Thyroid gland (tissue), 4 donors: ENCODE measurements at regions of chr6 and their contacts with region 1.

Region 1: GRCh38 chr6:37018198-37019064 is 13.0 kb downstream of the FGD2 start:
- DNase-seq: peak; percentile 95 to 97
- H3K4me3 ChIP-seq: no peak overlapping the region
- H3K27ac ChIP-seq: peak overlapping the region; percentile 72 to 86 (median 83)
- H3K4me1 ChIP-seq: peaks cover 22% of the 10 kb centered on the region in 2 donors
- H3K27me3 ChIP-seq: no peaks in the 10 kb centered on the region
- CTCF ChIP-seq: peak; percentile 71 to 98 (median 87)
- POLR2A ChIP-seq: no peak

Region 2: DNA sequence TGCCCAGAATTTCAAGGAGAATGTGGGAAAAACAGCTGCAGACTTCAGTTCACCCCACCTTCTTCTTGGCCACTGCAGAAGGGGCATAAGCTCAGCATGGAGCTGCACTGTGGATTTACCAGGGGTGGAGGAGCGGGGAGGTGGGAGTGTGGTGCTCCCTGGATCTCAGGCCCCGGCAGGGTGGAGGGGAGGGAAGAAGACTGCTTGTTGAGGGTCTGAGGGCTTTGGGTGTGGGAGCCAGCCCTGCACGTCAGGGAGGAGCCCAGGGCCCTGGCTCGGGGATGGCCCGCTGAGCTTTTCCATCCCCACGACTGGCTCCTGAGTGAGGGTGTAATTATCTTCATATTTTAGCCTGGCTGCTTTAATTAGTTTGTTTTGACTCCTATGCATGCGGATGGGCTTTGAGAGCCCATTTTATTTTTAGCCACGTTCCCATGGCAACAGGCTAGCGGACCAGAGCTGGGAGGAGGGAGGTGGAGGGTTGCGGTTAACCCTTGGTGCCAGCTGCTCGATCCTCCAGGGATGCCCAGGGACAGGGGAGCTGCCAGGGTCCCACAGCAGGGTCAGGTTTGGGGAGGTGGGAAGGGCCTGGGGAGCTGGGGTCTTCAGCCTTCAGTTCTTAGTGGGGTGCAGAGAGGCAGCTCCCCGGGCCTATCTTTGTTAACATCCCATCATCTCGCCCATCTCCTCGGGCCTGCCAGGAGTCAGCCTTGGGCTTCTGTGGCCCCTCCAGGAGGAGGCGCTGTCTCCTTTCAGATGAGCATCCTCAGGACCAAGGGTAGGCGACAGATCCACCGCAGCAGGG is 252.6 kb before region 1 on chr6:
- intact Hi-C with region 1: loop called (anchors 5 kb)
- DNase-seq: peak; percentile 77 to 82
- H3K4me3 ChIP-seq: no peak overlapping the region
- H3K27ac ChIP-seq: no peak overlapping the region
- H3K4me1 ChIP-seq: peaks cover 0 to 7% of the 10 kb centered on the region in 2 donors
- H3K27me3 ChIP-seq: no peaks in the 10 kb centered on the region
- CTCF ChIP-seq: peak; percentile 30 to 85 (median 81)
- POLR2A ChIP-seq: no peak

Region 3: DNA sequence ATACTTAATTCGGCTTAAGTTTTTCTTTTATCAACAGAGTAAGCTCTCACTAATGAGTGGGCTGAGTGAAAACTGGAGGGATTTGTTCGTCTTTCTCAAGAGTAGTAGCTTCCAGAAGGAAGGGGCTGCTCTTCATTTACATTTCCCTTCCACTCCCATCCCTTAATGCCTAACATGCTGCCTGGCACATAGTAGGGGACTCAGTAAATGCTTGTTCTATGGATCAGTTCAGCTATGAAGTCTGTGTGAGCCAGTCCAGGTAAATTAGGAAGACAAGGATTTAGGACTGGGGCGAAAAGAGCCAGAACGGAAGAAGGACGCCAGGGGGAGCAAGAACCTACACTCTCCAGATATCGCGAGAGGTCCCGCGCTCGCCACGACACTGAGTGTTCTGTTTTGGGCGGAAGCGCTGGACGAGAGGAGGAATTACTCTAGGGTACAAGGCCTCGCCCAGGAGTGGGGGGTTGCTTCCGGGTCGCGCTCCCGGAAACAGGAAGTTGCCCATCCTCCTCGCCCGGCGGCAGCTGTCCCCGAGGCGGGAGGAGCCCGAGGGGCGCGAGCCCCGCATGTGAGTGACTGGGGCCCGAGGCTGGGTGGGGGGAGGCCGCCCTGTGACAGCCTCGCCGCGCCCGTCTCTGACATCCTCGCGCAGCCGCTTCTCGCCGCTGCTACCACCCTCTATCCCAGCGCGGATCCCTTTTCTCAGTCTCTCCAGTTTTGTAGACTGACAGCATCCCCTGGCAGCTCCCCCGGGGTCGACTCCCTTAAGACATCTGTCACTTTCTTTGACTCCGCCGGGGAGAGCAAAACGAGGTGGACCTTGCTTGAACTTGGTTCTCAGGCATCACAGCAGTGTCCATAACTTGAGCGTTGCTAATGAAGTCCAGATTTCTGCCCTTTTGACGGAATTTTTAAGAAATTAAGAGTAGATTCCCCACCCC is 132.7 kb before region 1 on chr6 and contains the start of gene C6orf89:
- intact Hi-C with region 1: loop called (anchors 10 kb)
- DNase-seq: peak; percentile 98 to 99
- H3K4me3 ChIP-seq: peak within 1 kb of the TSS; percentile 47 to 68 (median 63)
- H3K27ac ChIP-seq: peak within 1 kb of the TSS; percentile 89 to 98 (median 93)
- H3K4me1 ChIP-seq: peaks cover 6 to 19% of the 10 kb centered on the region in 2 donors
- H3K27me3 ChIP-seq: no peaks in the 10 kb centered on the region
- CTCF ChIP-seq: peak in 4 of 6 experiments; percentile 87 to 98 (median 94)
- POLR2A ChIP-seq: peak in 1 of 2 donors; percentile 75
- total RNA-seq, gene C6orf89: 58.2 to 89.6 (median 68.9) TPM

Region 4: DNA sequence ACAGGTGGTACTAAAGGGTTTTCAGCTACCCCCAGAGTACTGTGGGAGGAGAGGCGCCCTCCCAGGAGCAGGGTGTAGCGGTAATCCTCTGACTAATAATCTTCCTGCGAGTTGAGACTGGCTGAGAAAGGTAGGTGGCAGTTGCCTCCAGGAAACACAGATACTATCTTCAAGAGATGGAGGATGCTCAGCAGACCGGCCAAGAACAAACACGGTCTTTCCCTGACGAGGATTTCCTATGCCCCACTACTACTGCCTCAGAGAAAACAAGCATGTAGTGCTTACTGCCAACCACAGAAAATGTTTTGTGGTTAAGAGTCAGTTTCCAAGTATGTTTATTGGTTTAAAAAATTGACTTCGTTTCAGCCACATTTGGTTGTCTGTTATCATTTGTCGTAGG is 105.8 kb before region 1 on chr6:
- intact Hi-C with region 1: loop called (anchors 10 kb)
- DNase-seq: no peak
- H3K4me3 ChIP-seq: no peak overlapping the region
- H3K27ac ChIP-seq: peak overlapping the region in 2 of 3 donors; percentile 71 to 95
- H3K4me1 ChIP-seq: peaks cover 48 to 52% of the 10 kb centered on the region in 2 donors
- H3K27me3 ChIP-seq: no peaks in the 10 kb centered on the region
- CTCF ChIP-seq: no peak
- POLR2A ChIP-seq: no peak

Region 5: GRCh38 chr6:37103169-37104039 is 85.0 kb after region 1 on chr6:
- intact Hi-C with region 1: no loop called
- DNase-seq: peak; percentile 87 to 91
- H3K4me3 ChIP-seq: peak overlapping the region in 1 of 3 donors; percentile 18
- H3K27ac ChIP-seq: peak overlapping the region; percentile 77 to 93 (median 83)
- H3K4me1 ChIP-seq: peaks cover 22 to 23% of the 10 kb centered on the region in 2 donors
- H3K27me3 ChIP-seq: no peaks in the 10 kb centered on the region
- CTCF ChIP-seq: no peak
- POLR2A ChIP-seq: no peak

Region 6: GRCh38 chr6:37137201-37138090 is 119.0 kb after region 1 on chr6:
- intact Hi-C with region 1: no loop called
- DNase-seq: peak in 1 of 2 donors; percentile 24
- H3K4me3 ChIP-seq: no peak overlapping the region
- H3K27ac ChIP-seq: no peak overlapping the region
- H3K4me1 ChIP-seq: peaks cover 0 to 20% of the 10 kb centered on the region in 2 donors
- H3K27me3 ChIP-seq: no peaks in the 10 kb centered on the region
- CTCF ChIP-seq: no peak
- POLR2A ChIP-seq: no peak